Activated naive CD4-positive, alpha-beta T cell treated with anti-CD3 and anti-CD28 coated beads for 36 hours (primary cell): ENCODE measurements at regions of chr14 and their contacts with region 1.

Region 1: GRCh38 chr14:30270200-30271161 is 288.5 kb upstream of the G2E3 start:
- DNase-seq: peak; percentile 80
- H3K4me3 Mint-ChIP-seq: peak overlapping the region; percentile 28
- H3K27ac Mint-ChIP-seq: no peak overlapping the region
- H3K4me1 Mint-ChIP-seq: peaks cover 4% of the 10 kb centered on the region
- H3K27me3 Mint-ChIP-seq: peaks cover 11% of the 10 kb centered on the region

Region 2: GRCh38 chr14:28756884-28757570 is 1513.5 kb before region 1 on chr14:
- CTCF ChIA-PET with region 1: interaction called, 3 read pairs
- intact Hi-C with region 1: loop called (anchors 5 kb)
- DNase-seq: peak; percentile 18
- H3K4me3 Mint-ChIP-seq: no peak overlapping the region
- H3K27ac Mint-ChIP-seq: no peak overlapping the region
- H3K4me1 Mint-ChIP-seq: no peaks in the 10 kb centered on the region
- H3K27me3 Mint-ChIP-seq: peaks cover 76% of the 10 kb centered on the region

Region 3: DNA sequence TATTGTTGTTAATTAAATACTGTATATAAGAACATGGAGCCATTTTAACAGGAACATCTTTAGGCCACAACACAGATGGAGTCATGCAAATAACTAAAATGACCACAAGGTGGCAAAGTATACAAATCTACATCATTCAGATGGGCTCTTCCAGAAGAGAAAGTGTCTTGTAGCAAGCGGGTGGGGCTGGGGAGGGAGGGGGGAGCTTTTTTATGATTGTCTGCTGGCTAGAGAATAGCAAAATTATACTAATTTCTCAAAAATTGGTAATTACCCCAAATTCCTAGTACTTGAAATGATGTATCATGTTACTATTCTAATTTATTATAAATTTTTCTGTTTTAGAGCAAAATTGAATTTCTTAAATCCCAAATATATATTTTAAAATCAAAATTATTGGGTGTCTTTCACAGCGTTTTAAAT is 721.5 kb before region 1 on chr14:
- CTCF ChIA-PET with region 1: interaction called, 4 read pairs
- intact Hi-C with region 1: loop called (anchors 5 kb)
- DNase-seq: no peak
- H3K4me3 Mint-ChIP-seq: no peak overlapping the region
- H3K27ac Mint-ChIP-seq: no peak overlapping the region
- H3K4me1 Mint-ChIP-seq: no peaks in the 10 kb centered on the region
- H3K27me3 Mint-ChIP-seq: no peaks in the 10 kb centered on the region

Region 4: DNA sequence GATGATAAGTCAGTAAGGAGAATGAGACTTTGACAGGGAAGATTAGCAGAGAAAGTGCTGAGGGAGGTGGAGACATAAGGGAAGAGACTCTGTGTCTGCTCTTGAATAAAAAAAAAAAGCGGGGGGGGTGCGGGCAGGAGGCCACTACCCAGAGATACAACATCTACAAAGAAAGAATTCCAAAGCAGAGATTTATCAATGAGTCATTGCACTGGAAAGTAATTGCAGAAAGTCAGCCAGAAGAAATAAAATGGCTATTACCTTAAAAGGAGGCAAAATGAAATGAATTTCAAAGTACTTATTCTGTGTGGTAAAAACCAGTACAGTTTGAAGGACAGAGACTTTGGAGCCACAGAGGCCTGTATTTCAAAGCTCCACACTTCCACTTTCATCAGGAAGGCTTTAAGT is 75.7 kb before region 1 on chr14:
- CTCF ChIA-PET with region 1: no interaction called
- intact Hi-C with region 1: no loop called
- DNase-seq: no peak
- H3K4me3 Mint-ChIP-seq: no peak overlapping the region
- H3K27ac Mint-ChIP-seq: no peak overlapping the region
- H3K4me1 Mint-ChIP-seq: no peaks in the 10 kb centered on the region
- H3K27me3 Mint-ChIP-seq: no peaks in the 10 kb centered on the region

Region 5: DNA sequence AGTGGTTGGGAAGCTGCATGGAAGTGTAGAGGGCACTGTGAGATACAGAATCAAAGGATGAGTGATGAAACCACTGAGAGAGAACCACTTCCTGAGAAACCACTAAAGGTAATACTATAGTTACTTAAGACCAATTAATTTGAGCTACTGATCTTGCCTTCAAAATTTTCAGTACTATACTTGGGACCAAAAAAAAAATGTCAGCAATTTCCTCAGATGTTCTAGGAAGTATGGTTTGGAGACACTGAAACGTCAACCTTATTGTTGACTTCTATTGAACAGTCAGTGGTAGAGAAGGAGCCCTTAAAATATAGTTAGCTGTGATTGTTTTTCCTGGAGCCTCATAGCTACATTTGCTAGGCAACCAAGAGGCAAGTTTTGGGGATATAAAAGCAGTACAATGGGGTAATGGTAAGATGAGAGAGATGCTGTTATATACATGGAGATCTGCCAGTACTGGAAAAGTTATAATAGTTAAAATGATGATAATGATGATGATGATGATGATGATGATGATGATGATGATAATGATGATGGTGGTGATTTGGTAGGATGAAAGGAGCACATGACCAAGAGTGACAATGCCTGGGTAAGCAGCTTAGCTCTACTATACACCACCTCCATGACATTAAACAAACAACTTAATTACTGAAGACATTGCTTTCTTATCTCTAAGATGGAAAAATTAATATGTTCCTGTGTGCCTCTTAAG is 12.4 kb before region 1 on chr14:
- CTCF ChIA-PET with region 1: interaction called, 15 read pairs
- intact Hi-C with region 1: no loop called
- DNase-seq: no peak
- H3K4me3 Mint-ChIP-seq: no peak overlapping the region
- H3K27ac Mint-ChIP-seq: no peak overlapping the region
- H3K4me1 Mint-ChIP-seq: no peaks in the 10 kb centered on the region
- H3K27me3 Mint-ChIP-seq: peaks cover 9% of the 10 kb centered on the region

Region 6: GRCh38 chr14:30283826-30284446 is 13.5 kb after region 1 on chr14:
- CTCF ChIA-PET with region 1: interaction called, 12 read pairs
- intact Hi-C with region 1: no loop called
- DNase-seq: peak; percentile 30
- H3K4me3 Mint-ChIP-seq: no peak overlapping the region
- H3K27ac Mint-ChIP-seq: no peak overlapping the region
- H3K4me1 Mint-ChIP-seq: no peaks in the 10 kb centered on the region
- H3K27me3 Mint-ChIP-seq: peaks cover 7% of the 10 kb centered on the region

Region 7: DNA sequence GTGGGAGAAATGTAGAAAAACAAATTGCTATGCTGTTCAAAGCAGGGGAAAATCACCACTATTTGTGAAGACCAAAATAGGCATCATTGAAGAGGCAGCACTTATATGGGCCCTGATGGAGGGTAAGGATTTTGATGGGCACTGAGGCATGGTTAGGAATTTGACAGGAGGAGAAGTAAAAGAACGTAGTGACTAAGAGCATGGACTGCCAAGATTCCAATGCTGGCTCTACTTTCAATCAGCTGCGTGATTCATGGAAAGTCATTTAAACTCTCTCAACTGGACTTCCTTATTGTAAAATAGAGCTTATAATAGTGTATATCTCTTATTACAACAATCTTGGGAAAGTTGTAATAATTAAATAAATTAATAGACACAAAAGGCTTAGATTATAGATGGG is 20.7 kb after region 1 on chr14:
- CTCF ChIA-PET with region 1: interaction called, 11 read pairs
- intact Hi-C with region 1: no loop called
- DNase-seq: no peak
- H3K4me3 Mint-ChIP-seq: no peak overlapping the region
- H3K27ac Mint-ChIP-seq: no peak overlapping the region
- H3K4me1 Mint-ChIP-seq: peaks cover 4% of the 10 kb centered on the region
- H3K27me3 Mint-ChIP-seq: peaks cover 13% of the 10 kb centered on the region

Region 8: DNA sequence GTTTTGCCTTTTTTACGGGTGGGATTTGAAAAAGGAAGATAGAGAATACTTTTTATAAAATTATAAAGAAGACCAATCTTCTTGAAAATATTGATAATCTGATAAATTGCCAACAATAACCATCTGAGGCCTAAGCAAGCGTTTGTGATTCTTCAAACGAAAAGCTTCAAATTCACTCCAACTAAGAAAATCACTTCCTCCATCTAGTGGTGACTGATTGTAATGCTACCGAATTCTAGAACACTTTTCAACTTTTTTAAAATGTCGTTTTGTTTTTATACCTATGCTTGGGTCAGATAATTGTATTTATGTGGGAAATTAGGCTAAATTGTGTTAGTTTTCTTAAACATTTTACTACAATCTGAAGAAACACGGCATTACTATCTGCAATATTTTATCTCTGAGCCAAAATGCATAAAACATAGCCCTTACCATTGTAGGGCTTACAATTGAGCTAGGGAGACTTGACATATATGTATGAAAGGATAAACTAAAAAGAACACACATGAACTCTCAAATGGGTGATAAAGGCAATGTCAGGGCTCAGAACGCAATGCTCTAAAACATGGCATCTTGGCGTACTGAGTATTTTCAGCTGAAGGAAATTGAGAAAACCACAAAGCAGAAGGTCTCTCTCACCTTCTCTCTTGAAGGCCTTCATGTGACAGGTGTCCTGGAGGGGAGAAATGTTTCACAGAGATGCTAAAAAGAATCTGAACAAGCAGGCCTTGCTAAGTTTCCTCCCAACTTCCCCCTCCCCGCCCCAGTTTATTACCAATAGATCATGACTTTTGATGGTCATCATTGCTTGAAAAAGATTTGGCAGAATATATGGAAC is 251.6 kb after region 1 on chr14:
- CTCF ChIA-PET with region 1: interaction called, 3 read pairs
- intact Hi-C with region 1: loop called (anchors 2 kb)
- DNase-seq: no peak
- H3K4me3 Mint-ChIP-seq: no peak overlapping the region
- H3K27ac Mint-ChIP-seq: no peak overlapping the region
- H3K4me1 Mint-ChIP-seq: peaks cover 4% of the 10 kb centered on the region
- H3K27me3 Mint-ChIP-seq: no peaks in the 10 kb centered on the region